ENCODE measurements at regions of chr1 and their contacts with region 1.

Region 1: DNA sequence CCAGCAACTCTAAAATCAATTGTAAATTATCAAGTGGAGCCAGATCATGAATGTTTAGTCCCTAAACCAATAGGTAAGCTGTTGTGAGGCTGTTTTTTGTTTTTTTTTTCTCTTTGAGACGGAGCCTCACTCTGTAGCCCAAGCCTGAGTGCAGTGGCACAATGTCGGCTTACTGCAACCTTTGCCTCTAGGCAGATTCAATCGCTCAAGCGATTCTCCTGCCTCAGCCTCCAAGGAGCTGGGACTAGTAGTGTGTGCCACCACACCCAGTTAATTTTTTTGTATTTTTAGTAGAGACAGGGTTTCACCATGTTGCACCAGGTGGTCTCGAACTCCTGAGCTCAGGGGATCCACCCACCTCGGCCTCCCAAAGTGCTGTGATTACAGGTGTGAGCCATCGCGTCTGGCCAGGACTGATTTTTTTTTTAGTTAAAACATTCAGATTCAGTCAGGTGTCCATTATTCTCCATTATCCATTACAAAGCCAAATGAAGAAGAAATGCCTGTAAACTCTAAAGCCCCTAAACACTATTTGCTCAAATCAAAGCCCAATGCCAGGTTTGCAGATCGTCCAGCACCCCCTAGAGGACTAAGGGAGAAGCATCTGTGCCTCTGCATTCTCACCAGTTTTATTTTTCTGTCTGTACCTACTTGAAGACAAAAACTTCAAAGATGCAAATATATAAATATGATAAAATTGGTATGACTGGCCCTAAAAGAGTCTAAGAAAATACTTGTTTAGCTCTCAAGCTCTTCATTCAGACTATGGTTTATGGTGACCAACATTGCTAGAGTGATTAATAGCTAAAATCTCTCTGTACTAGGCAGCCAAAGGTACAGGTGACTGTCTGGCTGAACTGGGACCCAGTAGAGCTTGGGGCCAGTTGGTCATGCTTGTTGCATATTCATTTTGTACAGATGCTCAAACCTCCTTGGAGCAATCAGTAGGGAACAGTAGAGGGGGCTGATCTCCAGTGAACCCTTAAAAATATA is 138.6 kb downstream of the SYT2 start:
- DNase-seq: peak in 1 of 2 experiments; percentile 55
- H3K4me3 ChIP-seq: no peak overlapping the region
- H3K4me3 Mint-ChIP-seq: no peak overlapping the region
- H3K27ac Mint-ChIP-seq: no peak overlapping the region
- H3K4me1 ChIP-seq: peaks cover 21% of the 10 kb centered on the region
- H3K4me1 Mint-ChIP-seq: peaks cover 30% of the 10 kb centered on the region
- H3K27me3 ChIP-seq: no peaks in the 10 kb centered on the region
- H3K27me3 Mint-ChIP-seq: no peaks in the 10 kb centered on the region
- CTCF ChIP-seq: peak; percentile 79 to 88

Region 2: DNA sequence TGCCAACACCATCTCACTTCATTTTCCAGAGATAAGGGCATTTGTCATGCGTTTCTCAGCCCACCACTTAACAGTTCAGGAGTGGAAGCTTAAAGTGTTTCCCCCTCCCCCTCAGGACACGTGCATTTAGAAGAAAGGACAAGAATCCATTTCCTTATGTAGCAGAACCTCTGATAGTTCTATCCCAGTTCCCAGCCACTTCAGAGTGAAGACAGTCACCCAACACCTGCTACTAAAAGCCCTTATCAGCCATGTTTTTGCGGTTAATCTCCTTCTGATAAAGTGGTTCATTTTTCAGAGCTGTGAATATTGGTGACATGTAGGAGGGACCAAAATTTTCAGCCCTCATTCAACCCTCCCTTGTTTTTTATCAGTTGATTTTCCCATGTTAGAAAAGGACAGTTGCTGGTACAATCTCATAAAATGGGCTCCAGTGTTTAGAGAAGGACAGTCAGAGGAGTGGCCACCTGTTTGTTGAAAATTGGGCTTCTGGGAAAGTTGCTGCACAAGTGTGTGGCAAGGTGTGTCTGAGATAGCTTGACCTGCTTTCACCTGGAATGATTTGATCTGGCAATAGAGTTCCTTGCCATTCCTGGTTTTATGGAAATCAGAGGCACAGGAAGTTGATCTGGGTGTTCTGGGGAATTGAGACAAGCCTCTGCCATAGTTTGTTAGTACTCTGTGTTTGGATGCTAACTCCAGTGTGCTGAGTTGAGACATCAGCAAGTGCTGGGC is 109.1 kb before region 1 on chr1:
- CTCF ChIA-PET with region 1: interaction called, 8 read pairs
- POLR2A ChIA-PET with region 1: no interaction called
- intact Hi-C with region 1: loop called (anchors 2 kb)
- DNase-seq: no peak
- H3K4me3 ChIP-seq: no peak overlapping the region
- H3K4me3 Mint-ChIP-seq: no peak overlapping the region
- H3K27ac Mint-ChIP-seq: no peak overlapping the region
- H3K4me1 ChIP-seq: peaks cover 8% of the 10 kb centered on the region
- H3K4me1 Mint-ChIP-seq: peaks cover 8% of the 10 kb centered on the region
- H3K27me3 ChIP-seq: no peaks in the 10 kb centered on the region
- H3K27me3 Mint-ChIP-seq: no peaks in the 10 kb centered on the region
- CTCF ChIP-seq: no peak

Region 3: DNA sequence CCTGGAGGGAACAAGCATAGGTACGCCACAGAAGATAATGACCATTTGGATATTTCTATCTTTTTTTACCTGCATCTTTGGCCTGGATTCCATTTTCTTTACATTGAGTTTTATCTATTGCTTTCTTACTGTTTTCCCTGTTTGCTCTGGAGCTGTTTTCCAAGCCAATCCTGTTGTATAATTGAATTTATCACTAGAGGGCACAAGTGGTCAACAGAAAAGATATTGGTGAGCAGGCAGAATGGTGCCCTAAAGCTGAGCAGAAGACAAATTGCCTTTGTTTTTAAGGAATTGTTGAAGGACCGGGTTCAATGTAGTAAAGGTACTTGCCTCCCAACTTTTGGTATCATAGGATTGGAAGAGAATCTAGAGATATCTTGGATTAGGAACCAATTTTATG is 70.4 kb before region 1 on chr1:
- CTCF ChIA-PET with region 1: interaction called, 4 read pairs
- POLR2A ChIA-PET with region 1: no interaction called
- intact Hi-C with region 1: loop called (anchors 1 kb)
- DNase-seq: no peak
- H3K4me3 ChIP-seq: no peak overlapping the region
- H3K4me3 Mint-ChIP-seq: no peak overlapping the region
- H3K27ac Mint-ChIP-seq: no peak overlapping the region
- H3K4me1 ChIP-seq: peaks cover 10% of the 10 kb centered on the region
- H3K4me1 Mint-ChIP-seq: peaks cover 9% of the 10 kb centered on the region
- H3K27me3 ChIP-seq: no peaks in the 10 kb centered on the region
- H3K27me3 Mint-ChIP-seq: no peaks in the 10 kb centered on the region
- CTCF ChIP-seq: peak in 1 of 2 experiments; percentile 26

Measured in Caco-2 (cell line).